Mammary epithelial cell (primary cell): ENCODE measurements at regions of chr3 and their contacts with region 1.

Region 1: GRCh38 chr3:9715764-9716437 is 12.3 kb downstream of the CPNE9 start:
- DNase-seq: peak; percentile 76
- H3K4me3 ChIP-seq: no peak overlapping the region
- H3K27ac ChIP-seq: no peak overlapping the region
- H3K4me1 ChIP-seq: no peaks in the 10 kb centered on the region
- H3K27me3 ChIP-seq: no peaks in the 10 kb centered on the region
- CTCF ChIP-seq: peak; percentile 96 to 99

Region 2: GRCh38 chr3:9731206-9732079 is 15.5 kb after region 1 on chr3 and contains the start of gene BRPF1:
- CTCF ChIA-PET with region 1: no interaction called
- dilution Hi-C with region 1: no loop called
- in situ Hi-C with region 1: no loop called
- intact Hi-C with region 1: loop called (anchors 1 kb)
- DNase-seq: peak; percentile 99
- H3K4me3 ChIP-seq: peak within 1 kb of the TSS; percentile 85 to 95 (median 87)
- H3K27ac ChIP-seq: peak within 1 kb of the TSS; percentile 99
- H3K4me1 ChIP-seq: peaks cover 13% of the 10 kb centered on the region
- H3K27me3 ChIP-seq: no peaks in the 10 kb centered on the region
- CTCF ChIP-seq: peak in 1 of 2 donors; percentile 36
- total RNA-seq, gene BRPF1: 16.5 to 21.2 TPM

Region 3: GRCh38 chr3:9769426-9770275 is 53.8 kb after region 1 on chr3 and contains the start of gene CAMK1:
- CTCF ChIA-PET with region 1: no interaction called
- dilution Hi-C with region 1: no loop called
- in situ Hi-C with region 1: no loop called
- intact Hi-C with region 1: no loop called
- DNase-seq: peak; percentile 54
- H3K4me3 ChIP-seq: peak within 1 kb of the TSS in 2 of 3 experiments; percentile 39 to 41
- H3K27ac ChIP-seq: no peak within 1 kb of the TSS
- H3K4me1 ChIP-seq: peaks cover 4% of the 10 kb centered on the region
- H3K27me3 ChIP-seq: no peaks in the 10 kb centered on the region
- CTCF ChIP-seq: no peak
- total RNA-seq, gene CAMK1: 0.50 to 2.3 TPM

Region 4: DNA sequence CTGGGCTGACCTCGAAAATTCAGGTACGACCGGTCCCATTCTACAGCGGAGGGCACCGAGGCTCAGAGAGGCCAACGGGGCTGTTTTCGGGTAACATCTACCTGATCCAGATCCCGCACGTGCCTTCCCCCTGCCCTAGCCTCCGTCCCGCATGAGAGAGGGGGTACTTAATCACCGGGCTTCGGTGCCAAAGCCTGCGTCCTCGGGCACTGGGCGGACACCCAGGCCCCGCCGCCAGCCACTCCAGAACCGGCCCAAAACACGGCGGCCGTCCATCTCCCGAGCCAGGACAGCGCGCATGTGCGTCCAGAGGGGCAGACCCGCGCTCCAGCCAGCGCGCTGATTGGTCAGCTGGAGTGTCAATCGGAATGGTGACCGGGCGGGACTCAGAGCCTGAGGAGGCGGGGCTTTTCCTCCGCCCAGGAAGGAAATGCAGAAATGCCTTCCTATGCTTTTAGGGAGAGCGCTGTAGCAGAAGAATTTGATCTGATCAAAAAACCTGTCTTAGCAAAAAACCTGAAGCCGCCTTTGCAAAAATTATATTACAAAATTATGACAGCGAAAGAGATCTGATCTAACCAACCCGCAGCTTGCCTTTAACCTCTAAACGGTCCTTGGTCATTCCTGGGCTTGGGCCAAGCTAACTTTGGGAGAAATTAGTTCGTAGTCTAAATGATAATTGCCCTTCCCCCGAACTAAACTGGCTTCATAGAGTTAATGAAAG is 128.0 kb after region 1 on chr3 and contains the start of gene RPUSD3:
- CTCF ChIA-PET with region 1: no interaction called
- dilution Hi-C with region 1: no loop called
- in situ Hi-C with region 1: no loop called
- intact Hi-C with region 1: loop called (anchors 2 kb)
- DNase-seq: peak; percentile 92
- H3K4me3 ChIP-seq: peak within 1 kb of the TSS; percentile 62 to 68 (median 67)
- H3K27ac ChIP-seq: peak within 1 kb of the TSS; percentile 29
- H3K4me1 ChIP-seq: peaks cover 16% of the 10 kb centered on the region
- H3K27me3 ChIP-seq: no peaks in the 10 kb centered on the region
- CTCF ChIP-seq: no peak
- total RNA-seq, gene RPUSD3: 35.0 to 40.8 TPM

Region 5: GRCh38 chr3:9946112-9947024 is 230.5 kb after region 1 on chr3:
- CTCF ChIA-PET with region 1: no interaction called
- dilution Hi-C with region 1: no loop called
- in situ Hi-C with region 1: no loop called
- intact Hi-C with region 1: loop called (anchors 2 kb)
- DNase-seq: peak; percentile 79
- H3K4me3 ChIP-seq: peak overlapping the region; percentile 43 to 56 (median 52)
- H3K27ac ChIP-seq: no peak overlapping the region
- H3K4me1 ChIP-seq: peaks cover 10% of the 10 kb centered on the region
- H3K27me3 ChIP-seq: no peaks in the 10 kb centered on the region
- CTCF ChIP-seq: peak; percentile 64 to 78

Region 6: DNA sequence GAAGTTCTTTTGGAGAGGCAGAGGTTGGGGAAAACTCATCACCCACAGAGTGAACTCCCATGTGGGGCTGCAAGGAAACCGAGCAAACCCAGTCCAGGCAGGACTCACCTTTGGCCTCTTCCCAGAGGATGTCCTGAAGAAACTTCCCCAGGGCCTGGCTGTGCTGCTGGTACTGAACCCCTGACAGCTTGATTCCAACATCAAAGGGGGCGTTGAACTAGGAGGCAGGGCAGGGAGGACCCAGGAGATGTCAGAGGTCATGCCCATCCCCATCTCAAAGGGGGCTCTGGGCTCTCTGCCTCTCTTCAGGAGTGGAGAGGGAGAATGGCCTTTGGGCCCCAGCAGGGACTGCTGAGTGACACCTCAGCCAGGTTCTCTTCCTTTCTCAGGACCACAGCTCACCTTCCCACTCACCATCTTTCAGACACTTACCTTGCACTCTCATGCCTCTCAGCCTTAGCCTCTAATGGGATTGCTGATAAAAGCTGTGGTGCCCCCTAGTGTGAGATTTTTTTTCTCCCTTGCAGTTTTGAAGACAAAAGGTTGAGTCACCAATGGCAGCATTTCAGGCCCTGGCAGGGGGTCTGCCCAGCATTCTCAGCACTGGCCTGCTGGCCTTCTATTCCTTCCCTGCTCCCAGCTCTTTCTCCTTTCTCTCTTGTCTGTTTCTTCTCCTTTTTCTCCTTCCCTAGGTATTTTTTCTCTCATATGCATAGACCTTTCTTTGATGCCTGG is 570.9 kb after region 1 on chr3:
- CTCF ChIA-PET with region 1: no interaction called
- dilution Hi-C with region 1: no loop called
- in situ Hi-C with region 1: no loop called
- intact Hi-C with region 1: loop called (anchors 5 kb)
- DNase-seq: peak; percentile 39
- H3K4me3 ChIP-seq: no peak overlapping the region
- H3K27ac ChIP-seq: no peak overlapping the region
- H3K4me1 ChIP-seq: no peaks in the 10 kb centered on the region
- H3K27me3 ChIP-seq: no peaks in the 10 kb centered on the region
- CTCF ChIP-seq: no peak